ENCODE measurements at regions of chr6 and their contacts with region 1.

Region 1: GRCh38 chr6:46419576-46420002 is 71.7 kb downstream of the RCAN2 start:
- DNase-seq: peak; percentile 71
- H3K4me3 Mint-ChIP-seq: no peak overlapping the region
- H3K27ac Mint-ChIP-seq: no peak overlapping the region
- H3K4me1 Mint-ChIP-seq: no peaks in the 10 kb centered on the region
- H3K27me3 Mint-ChIP-seq: peaks cover 12% of the 10 kb centered on the region

Region 2: DNA sequence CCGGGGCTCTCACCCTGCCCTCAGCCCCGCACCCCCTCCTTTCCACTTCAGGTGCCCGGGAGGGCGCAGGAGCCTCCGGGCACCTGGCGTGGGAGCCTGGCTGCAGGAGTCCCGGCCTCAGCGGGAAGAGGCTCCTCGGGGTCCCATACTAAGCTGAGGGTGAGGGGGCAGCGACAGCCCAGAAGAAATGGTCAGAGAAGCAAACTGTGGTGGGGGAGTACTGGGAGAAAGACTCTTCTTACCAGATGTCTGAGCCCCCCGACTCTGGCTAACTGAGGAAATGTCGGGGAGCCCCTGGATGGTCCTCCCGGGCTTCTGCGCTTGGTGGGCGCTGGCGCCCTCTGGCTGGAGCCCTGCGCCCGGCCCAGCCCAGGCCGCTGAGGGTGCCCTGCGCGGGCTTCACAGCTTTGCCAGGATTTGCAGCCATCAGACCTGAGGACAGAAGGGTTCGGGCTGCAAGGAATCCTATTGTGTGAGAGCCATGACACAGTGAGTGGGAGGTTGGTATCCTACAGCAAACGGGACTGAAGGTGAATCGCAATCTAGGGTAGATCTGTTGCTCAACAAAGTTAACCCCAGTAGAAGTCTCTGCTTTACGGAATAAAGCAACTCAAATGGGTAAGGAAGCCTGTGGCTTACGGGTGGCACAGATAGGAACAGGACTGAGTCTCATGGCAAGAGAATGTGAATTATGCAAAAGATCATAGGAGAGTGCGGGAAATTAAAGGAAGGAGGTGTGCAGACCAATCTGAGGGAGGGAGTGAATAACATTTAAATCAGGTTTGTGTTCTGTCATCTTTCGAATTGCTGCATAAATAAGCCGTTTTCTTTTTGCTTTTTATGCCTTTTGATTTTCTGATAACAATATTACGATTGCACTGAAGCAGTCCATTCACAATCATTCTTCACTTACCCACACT is 72.3 kb after region 1 on chr6:
- CTCF ChIA-PET with region 1: interaction called, 3 read pairs
- intact Hi-C with region 1: loop called (anchors 5 kb)
- DNase-seq: no peak
- H3K4me3 Mint-ChIP-seq: peak overlapping the region; percentile 12
- H3K27ac Mint-ChIP-seq: no peak overlapping the region
- H3K4me1 Mint-ChIP-seq: peaks cover 7% of the 10 kb centered on the region
- H3K27me3 Mint-ChIP-seq: peaks cover 58% of the 10 kb centered on the region

Region 3: DNA sequence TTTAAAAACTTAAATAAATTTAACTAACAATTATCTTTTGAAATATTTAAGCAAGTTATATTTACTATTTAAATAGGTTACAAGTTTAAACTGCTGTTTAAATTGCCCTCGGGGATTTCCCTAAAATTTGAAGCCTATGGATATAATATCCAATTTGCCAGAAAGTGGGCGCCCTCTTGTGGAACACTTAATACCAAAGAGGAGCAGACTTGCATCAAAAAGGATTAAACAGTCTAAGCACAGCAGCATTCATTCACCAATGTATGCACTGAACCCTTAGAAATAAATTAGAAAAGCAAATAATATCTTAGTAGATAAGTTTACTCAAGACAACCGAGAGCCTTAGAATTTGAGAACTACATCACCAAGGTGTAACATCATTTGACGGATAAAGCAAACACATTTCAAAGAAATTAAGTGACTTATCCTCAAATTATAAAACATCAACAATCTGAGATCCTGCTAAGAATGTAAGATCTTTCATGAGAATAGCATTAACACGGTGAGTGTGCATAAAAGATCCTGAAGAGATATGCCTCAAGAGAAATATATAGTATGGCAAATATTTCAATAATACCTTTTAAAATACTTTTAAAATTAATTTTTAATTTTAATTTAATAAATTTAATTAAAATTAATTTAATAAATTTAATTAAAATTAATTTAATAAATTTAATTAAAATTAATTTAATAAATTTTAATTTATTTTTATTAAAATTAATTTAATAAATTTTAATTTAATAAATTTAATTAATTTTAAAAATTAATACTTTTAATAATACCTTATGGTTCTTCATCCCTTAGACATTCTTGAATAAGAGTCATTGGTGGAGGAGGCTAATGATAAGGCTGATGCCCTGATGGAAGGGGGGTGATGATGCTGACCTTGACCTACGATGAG is 362.1 kb after region 1 on chr6:
- CTCF ChIA-PET with region 1: no interaction called
- intact Hi-C with region 1: loop called (anchors 1 kb)
- DNase-seq: peak; percentile 60
- H3K4me3 Mint-ChIP-seq: no peak overlapping the region
- H3K27ac Mint-ChIP-seq: no peak overlapping the region
- H3K4me1 Mint-ChIP-seq: no peaks in the 10 kb centered on the region
- H3K27me3 Mint-ChIP-seq: peaks cover 10% of the 10 kb centered on the region

Region 4: GRCh38 chr6:46862381-46862780 is 442.8 kb after region 1 on chr6:
- CTCF ChIA-PET with region 1: no interaction called
- intact Hi-C with region 1: loop called (anchors 2 kb)
- DNase-seq: peak; percentile 18
- H3K4me3 Mint-ChIP-seq: no peak overlapping the region
- H3K27ac Mint-ChIP-seq: no peak overlapping the region
- H3K4me1 Mint-ChIP-seq: no peaks in the 10 kb centered on the region
- H3K27me3 Mint-ChIP-seq: peaks cover 11% of the 10 kb centered on the region

Region 5: DNA sequence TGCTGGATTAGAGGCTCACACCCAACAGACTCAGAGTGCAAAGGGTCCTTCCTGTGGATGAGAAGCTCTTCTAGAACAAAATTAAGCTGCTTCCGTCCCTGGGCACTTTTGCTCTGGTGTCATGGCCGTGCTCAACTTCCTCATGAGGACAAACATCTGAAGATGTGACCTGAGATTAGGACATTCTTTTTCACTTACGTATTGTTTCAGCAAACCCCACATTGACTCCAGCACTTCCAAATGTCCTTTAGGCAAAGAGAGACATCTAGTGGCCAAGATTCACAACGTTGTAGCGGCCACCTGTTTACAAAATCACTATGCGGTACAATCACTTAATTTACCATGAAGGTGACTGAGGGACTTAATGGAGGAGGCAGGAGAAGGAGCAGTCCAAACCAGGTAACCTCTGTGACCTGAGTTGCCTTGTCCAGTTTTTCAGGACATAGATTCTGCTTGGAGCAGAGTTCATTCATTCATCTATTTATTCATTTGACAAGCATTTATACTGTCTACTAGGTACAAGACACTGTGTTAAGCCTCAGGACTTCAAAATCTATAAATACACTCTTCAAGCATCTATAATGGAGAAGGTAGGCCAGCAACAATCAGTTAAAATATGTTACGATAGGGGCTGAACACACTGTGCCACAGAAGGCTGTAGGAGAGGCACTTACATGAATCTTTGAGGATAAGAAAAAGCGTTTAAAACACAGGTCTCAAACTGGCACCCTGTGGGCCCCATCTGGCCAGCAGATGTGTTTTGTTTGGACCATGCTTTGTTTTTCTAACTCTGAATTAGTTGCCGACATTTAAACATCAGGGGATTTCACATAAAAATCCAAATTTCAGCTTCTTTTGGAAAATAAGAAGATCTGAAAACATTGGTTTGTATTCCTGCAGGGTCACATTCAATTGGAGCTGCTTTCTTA is 628.2 kb after region 1 on chr6:
- CTCF ChIA-PET with region 1: no interaction called
- intact Hi-C with region 1: loop called (anchors 1 kb)
- DNase-seq: peak; percentile 49
- H3K4me3 Mint-ChIP-seq: no peak overlapping the region
- H3K27ac Mint-ChIP-seq: no peak overlapping the region
- H3K4me1 Mint-ChIP-seq: no peaks in the 10 kb centered on the region
- H3K27me3 Mint-ChIP-seq: peaks cover 7% of the 10 kb centered on the region

Region 6: DNA sequence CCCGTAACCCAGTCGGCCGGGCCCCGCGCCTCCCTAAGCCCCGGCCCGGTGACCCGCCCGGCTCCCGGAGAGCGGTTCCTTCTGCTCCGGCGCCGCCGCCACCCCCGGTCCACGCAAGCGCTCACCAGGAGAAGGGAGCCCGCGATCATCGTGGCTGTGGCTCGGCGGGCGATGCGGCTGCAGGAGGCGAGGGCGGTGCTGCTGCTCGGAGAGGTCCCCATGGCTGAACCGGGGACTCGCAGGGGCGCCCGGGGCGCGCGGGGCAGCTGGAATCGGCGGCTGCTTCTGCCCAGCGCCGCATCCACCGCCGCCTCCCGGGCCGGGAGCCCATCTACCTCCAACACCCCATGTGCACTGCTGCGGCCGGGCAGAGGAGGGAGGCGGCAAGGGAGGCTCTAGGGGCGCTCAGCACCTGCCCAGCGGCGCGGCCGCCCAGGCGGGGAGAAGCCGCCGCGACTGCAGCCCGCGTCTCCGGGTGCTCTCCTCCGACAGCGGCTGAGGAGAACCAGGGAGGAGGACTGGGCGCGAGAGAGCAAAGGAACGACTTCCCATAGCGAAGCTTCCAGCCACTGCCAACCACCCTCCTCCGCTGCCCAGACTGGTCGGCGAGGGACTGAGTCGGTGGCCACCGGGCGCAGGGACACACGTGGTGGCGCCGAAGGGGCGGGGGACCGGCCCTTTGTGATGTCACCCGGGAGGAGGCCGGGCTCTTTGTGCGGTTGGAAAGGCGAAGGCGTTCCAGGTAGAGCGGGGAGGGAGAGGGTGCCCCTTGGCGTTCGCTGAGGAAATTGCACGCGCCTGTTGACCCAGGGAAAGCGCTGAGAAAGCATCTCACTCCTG is 889.9 kb after region 1 on chr6 and contains the start of gene TNFRSF21:
- CTCF ChIA-PET with region 1: no interaction called
- intact Hi-C with region 1: loop called (anchors 1 kb)
- DNase-seq: peak; percentile 91
- H3K4me3 Mint-ChIP-seq: peak within 1 kb of the TSS; percentile 74
- H3K27ac Mint-ChIP-seq: no peak within 1 kb of the TSS
- H3K4me1 Mint-ChIP-seq: peaks cover 7% of the 10 kb centered on the region
- H3K27me3 Mint-ChIP-seq: peaks cover 42% of the 10 kb centered on the region
- total RNA-seq, gene TNFRSF21: 3.6 to 4.3 TPM